HepG2 (cell line): ENCODE measurements at regions of chr9 and their contacts with region 1.

Region 1: DNA sequence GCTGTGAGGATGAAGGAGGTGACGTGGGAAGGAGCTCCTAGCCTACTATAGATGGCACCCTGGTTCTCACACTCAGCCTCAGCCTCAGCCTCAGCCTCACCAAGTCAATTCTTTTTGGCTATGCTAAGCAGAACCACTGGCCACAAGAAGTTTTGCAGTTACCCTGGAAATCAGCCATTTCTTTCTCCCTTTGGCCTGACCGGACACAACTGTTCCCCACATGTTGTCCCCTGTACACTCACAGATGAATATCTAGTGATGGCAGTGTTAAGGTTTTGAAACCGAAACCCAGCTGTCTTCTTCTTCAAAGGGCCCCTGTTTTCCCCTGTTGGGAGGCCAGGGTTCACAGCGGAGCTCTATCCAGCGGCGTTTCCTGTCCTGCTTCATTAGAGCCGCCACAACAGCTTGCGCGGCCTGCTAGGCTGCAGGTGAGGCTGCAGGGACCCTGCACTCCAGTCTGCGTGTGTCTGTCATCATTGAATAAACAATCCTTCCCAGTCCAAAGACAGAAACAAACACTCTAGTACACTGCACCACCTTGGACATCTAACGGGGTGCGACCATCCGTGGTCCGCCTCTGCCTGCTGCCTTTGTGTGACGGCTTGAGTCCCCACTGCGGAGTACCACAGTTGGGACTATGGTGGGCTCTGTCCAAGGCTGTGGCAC is 250.5 kb downstream of the DENND1A start:
- DNase-seq: peak; percentile 88
- ATAC-seq: peak; percentile 97
- H3K4me3 ChIP-seq: peak overlapping the region; percentile 23 to 63 (median 49); a peak in 4 of 6 replicates
- H3K27ac ChIP-seq: peak overlapping the region; percentile 66
- H3K4me1 ChIP-seq: peaks cover 39% of the 10 kb centered on the region
- H3K27me3 ChIP-seq: no peaks in the 10 kb centered on the region
- CTCF ChIP-seq: no peak
- EP300 ChIP-seq: peak in 1 of 2 experiments; percentile 37; a peak in 1 of 4 replicates
- POLR2A ChIP-seq: no peak
- RAD21 ChIP-seq: peak; percentile 30; the same call in 1 of the 2 replicates

Region 2: GRCh38 chr9:123584202-123585184 is 95.0 kb before region 1 on chr9:
- CTCF ChIA-PET with region 1: no interaction called
- POLR2A ChIA-PET with region 1: no interaction called
- in situ Hi-C with region 1: no loop called
- intact Hi-C with region 1: no loop called
- DNase-seq: no peak
- ATAC-seq: no peak
- H3K4me3 ChIP-seq: no peak overlapping the region
- H3K27ac ChIP-seq: no peak overlapping the region
- H3K4me1 ChIP-seq: no peaks in the 10 kb centered on the region
- H3K27me3 ChIP-seq: no peaks in the 10 kb centered on the region
- CTCF ChIP-seq: no peak
- EP300 ChIP-seq: no peak
- POLR2A ChIP-seq: no peak
- RAD21 ChIP-seq: no peak

Region 3: GRCh38 chr9:123742009-123742767 is 62.7 kb after region 1 on chr9:
- CTCF ChIA-PET with region 1: no interaction called
- POLR2A ChIA-PET with region 1: no interaction called
- in situ Hi-C with region 1: no loop called
- intact Hi-C with region 1: loop called (anchors 1 kb)
- DNase-seq: peak; percentile 91
- ATAC-seq: peak; percentile 94
- H3K4me3 ChIP-seq: peak overlapping the region; percentile 31 to 59 (median 44)
- H3K27ac ChIP-seq: peak overlapping the region; percentile 81
- H3K4me1 ChIP-seq: peaks cover 67% of the 10 kb centered on the region
- H3K27me3 ChIP-seq: no peaks in the 10 kb centered on the region
- CTCF ChIP-seq: peak; percentile 52
- EP300 ChIP-seq: peak in 1 of 2 experiments; percentile 55; a peak in 1 of 4 replicates
- POLR2A ChIP-seq: peak in 1 of 2 experiments; percentile 27; a peak in 1 of 4 replicates
- RAD21 ChIP-seq: no peak

Region 4: GRCh38 chr9:123757547-123757946 is 78.1 kb after region 1 on chr9:
- CTCF ChIA-PET with region 1: no interaction called
- POLR2A ChIA-PET with region 1: no interaction called
- in situ Hi-C with region 1: no loop called
- intact Hi-C with region 1: no loop called
- DNase-seq: no peak
- ATAC-seq: no peak
- H3K4me3 ChIP-seq: no peak overlapping the region
- H3K27ac ChIP-seq: no peak overlapping the region
- H3K4me1 ChIP-seq: peaks cover 18% of the 10 kb centered on the region
- H3K27me3 ChIP-seq: no peaks in the 10 kb centered on the region
- CTCF ChIP-seq: no peak
- EP300 ChIP-seq: no peak
- POLR2A ChIP-seq: no peak
- RAD21 ChIP-seq: no peak

Region 5: DNA sequence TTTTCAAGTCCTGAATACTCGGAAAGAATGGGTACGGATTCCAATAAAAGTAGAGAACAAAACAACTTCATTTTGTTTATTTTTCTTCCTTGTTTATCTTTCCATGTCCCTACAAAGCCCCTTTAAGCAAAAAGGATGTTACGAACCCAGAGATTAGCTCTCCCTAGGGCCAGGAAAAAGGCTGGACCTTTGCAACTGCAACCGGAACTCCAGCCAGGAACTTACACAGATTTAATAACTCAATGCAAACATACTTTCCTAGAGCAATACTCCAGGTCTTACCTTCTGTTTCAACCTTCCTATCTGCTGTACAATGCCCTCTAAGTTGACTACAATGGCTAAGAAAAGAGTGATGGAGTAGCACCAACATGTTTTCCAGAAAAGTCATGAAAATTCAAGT is 243.5 kb after region 1 on chr9:
- CTCF ChIA-PET with region 1: no interaction called
- POLR2A ChIA-PET with region 1: no interaction called
- in situ Hi-C with region 1: no loop called
- intact Hi-C with region 1: loop called (anchors 1 kb)
- DNase-seq: peak; percentile 76
- ATAC-seq: peak; percentile 81
- H3K4me3 ChIP-seq: peak overlapping the region; percentile 36 to 57 (median 40); a peak in 4 of 6 replicates
- H3K27ac ChIP-seq: peak overlapping the region; percentile 90
- H3K4me1 ChIP-seq: peaks cover 84% of the 10 kb centered on the region
- H3K27me3 ChIP-seq: no peaks in the 10 kb centered on the region
- CTCF ChIP-seq: no peak
- EP300 ChIP-seq: peak in 1 of 2 experiments; percentile 70; a peak in 1 of 4 replicates
- POLR2A ChIP-seq: no peak
- RAD21 ChIP-seq: no peak